ENCODE measurements at regions of chr9 and their contacts with region 1.

Region 1: GRCh38 chr9:121399883-121400607 is 30.0 kb upstream of the STOM start:
- DNase-seq: no peak
- H3K4me3 ChIP-seq: no peak overlapping the region
- H3K27ac ChIP-seq: peak overlapping the region in 1 of 2 donors; percentile 2
- H3K4me1 ChIP-seq: no peaks in the 10 kb centered on the region
- H3K27me3 ChIP-seq: no peaks in the 10 kb centered on the region
- CTCF ChIP-seq: peak; percentile 76 to 88 (median 76)
- POLR2A ChIP-seq: no peak

Region 2: DNA sequence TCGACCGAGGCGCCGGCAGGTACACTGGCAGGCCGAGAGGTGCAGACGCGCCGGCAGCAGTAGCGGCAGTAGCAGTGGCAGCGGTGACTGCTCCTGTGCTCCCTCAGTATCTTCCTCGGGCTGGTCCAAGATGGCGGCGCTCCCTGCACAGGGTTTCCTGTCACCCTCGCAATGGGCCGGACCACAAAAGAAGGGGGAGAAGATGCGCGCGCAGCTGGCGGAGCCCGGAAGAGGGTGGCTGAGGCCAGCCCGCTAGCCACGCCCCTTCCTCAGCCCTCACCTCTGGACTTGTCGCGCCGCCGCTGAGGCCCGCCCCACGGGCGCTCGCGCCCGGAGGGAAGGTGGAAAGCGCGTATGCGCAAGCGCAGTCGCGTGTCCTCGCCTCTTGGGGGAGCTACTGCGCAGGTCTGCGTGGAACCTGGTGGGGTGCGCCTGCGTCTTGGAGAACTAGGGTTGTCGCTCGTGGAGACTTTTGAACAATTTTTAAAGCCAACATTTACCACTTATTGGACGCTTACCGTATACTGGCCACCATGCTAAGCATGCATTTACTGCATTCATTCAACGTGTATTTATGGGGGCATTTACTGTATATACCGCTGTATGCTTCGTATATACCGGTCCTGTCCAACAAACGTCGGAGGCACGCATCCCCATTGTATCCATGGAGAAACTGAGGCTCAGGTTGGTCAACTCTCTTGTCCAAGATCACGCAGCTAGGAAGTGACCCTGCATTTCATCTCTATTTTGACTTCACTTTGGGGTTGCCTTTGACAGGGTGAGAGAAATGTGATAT is 198.1 kb before region 1 on chr9 and contains the start of gene RAB14:
- intact Hi-C with region 1: loop called (anchors 10 kb)
- DNase-seq: peak; percentile 99 to 100
- H3K4me3 ChIP-seq: peak within 1 kb of the TSS; percentile 96 to 99 (median 96)
- H3K27ac ChIP-seq: peak within 1 kb of the TSS; percentile 97 to 98
- H3K4me1 ChIP-seq: peaks cover 0 to 7% of the 10 kb centered on the region in 2 donors
- H3K27me3 ChIP-seq: no peaks in the 10 kb centered on the region
- CTCF ChIP-seq: peak; percentile 42 to 47 (median 43)
- POLR2A ChIP-seq: peak; percentile 80
- total RNA-seq, gene RAB14: 36.5 to 53.1 (median 41.3) TPM

Region 3: DNA sequence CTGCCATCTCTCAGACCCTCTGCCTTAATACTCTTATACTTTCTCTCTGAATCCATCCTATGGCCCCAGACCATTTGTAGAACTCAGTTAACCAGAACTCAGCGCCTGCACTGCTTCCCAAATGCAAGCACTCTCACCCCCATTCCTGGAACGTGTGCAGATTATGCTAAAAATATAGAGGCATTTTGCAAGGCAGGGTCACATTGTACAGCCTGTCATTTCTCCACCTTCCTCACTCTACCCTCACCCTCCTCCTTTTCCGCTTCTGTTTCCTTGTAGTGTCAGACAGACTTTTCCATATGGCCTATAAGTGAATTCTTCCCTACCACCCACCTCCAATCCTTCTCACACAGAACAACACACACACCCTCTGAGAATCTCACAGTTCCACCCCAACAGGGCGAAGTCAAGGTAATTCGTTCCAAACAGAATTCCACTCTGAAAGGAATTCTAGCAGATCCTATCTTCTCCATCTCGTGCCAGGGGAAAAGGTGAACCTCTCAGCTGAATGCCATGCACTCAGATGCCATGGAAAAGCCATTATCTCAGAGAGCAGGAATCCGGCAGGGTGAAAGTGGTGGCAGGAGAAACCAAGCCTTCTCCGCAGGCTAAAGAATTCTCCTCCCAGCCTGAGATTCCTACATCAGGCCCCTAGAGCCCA is 74.3 kb after region 1 on chr9:
- intact Hi-C with region 1: no loop called
- DNase-seq: peak in 1 of 2 donors; percentile 28
- H3K4me3 ChIP-seq: no peak overlapping the region
- H3K27ac ChIP-seq: peak overlapping the region in 1 of 2 donors; percentile 43
- H3K4me1 ChIP-seq: no peaks in the 10 kb centered on the region
- H3K27me3 ChIP-seq: no peaks in the 10 kb centered on the region
- CTCF ChIP-seq: no peak
- POLR2A ChIP-seq: no peak

Region 4: DNA sequence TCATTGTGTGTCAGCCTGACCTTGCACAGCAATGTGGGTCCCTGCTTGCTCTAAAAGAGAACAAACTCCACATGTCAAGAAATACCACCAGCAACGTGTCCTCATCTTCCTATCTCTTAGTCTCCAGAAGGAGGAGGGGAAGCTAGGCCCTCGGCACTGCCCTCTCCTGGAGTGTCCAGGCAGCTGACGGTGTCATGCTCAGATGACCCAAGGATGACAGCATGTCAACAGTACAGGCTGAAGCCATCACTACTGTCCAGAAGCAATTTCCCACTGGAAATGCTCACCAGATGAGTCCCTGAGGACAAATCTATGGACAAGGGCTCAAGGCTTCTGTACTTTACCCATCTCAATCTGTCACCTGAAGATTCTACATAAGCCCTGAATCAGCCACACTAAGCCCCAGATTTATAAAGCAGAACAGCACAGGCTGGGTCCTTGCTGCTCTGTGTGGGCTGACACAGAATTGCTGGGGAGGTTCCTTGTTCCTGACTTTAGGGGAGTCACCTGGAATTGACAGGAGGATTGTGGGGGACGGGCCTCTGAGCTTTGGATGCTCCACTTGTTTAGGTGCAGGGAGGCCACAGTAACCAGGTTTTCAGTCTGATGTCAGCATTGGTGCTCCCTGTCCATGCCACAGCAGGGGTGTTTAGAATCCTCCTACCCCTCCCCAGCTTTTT is 461.6 kb after region 1 on chr9:
- intact Hi-C with region 1: no loop called
- DNase-seq: peak in 1 of 2 donors; percentile 15
- H3K4me3 ChIP-seq: no peak overlapping the region
- H3K27ac ChIP-seq: peak overlapping the region; percentile 16 to 29
- H3K4me1 ChIP-seq: peaks cover 0 to 5% of the 10 kb centered on the region in 2 donors
- H3K27me3 ChIP-seq: no peaks in the 10 kb centered on the region
- CTCF ChIP-seq: peak in 1 of 3 donors; percentile 23
- POLR2A ChIP-seq: no peak

Region 5: GRCh38 chr9:123081824-123082223 is 1681.8 kb after region 1 on chr9:
- intact Hi-C with region 1: no loop called
- DNase-seq: no peak
- H3K4me3 ChIP-seq: no peak overlapping the region
- H3K27ac ChIP-seq: no peak overlapping the region
- H3K4me1 ChIP-seq: no peaks in the 10 kb centered on the region
- H3K27me3 ChIP-seq: no peaks in the 10 kb centered on the region
- CTCF ChIP-seq: peak; percentile 20 to 56 (median 46)
- POLR2A ChIP-seq: no peak